PC-9 (cell line): ENCODE measurements at regions of chr12 and their contacts with region 1.

Region 1: GRCh38 chr12:66087365-66087943 is 43.1 kb downstream of the LLPH start:
- DNase-seq: peak in 1 of 2 experiments; percentile 56
- H3K4me3 ChIP-seq: no peak overlapping the region
- H3K27ac ChIP-seq: no peak overlapping the region
- H3K4me1 ChIP-seq: no peaks in the 10 kb centered on the region
- H3K27me3 ChIP-seq: no peaks in the 10 kb centered on the region
- CTCF ChIP-seq: peak; percentile 80

Region 2: GRCh38 chr12:64835901-64836300 is 1251.6 kb before region 1 on chr12:
- CTCF ChIA-PET with region 1: no interaction called
- POLR2A ChIA-PET with region 1: no interaction called
- intact Hi-C with region 1: no loop called
- DNase-seq: no peak
- H3K4me3 ChIP-seq: no peak overlapping the region
- H3K27ac ChIP-seq: no peak overlapping the region
- H3K4me1 ChIP-seq: 0 out of 2 replicates have a peak, but pooled peaks cover 7% of the 10 kb centered on the region
- H3K27me3 ChIP-seq: no peaks in the 10 kb centered on the region
- CTCF ChIP-seq: no peak

Region 3: DNA sequence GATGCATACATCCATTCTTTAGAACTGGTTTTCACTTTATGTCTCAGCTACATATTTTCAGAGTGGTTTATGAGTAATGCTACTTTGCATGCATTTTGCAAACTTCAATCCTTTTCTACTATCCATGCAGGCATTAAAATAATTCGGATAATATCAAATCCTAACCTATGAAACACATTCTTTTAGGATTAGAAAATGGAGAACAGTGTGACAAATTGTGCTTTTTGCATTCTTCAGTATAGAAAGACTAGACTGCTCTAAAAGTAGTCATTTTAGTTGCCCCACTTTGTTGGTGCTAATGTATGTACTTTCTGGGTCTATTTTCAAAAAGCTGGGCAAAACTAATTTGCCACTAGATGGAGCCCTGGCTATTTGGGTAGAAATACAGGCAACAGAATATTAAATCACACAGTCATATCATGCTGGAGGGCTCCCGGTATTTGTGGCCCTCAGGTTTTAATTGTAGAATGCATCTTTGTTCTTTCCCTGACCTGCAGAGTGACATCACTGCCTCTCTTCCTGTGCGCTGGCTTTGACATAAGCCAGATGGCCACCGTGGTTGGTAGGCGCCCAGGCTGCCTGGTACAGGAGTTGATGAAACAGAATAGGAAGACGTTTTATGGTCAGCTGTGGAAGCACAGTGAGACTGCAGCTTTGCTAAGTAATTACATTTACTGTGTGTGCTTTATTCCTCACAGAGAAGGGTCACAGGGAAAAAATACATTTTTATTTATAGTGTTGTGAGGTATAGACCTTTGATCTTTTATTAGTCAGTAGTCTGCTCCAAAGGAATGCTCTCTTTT is 780.9 kb before region 1 on chr12:
- CTCF ChIA-PET with region 1: interaction called, 3 read pairs
- POLR2A ChIA-PET with region 1: no interaction called
- intact Hi-C with region 1: loop called (anchors 1 kb)
- DNase-seq: peak in 1 of 2 experiments; percentile 32
- H3K4me3 ChIP-seq: no peak overlapping the region
- H3K27ac ChIP-seq: no peak overlapping the region
- H3K4me1 ChIP-seq: no peaks in the 10 kb centered on the region
- H3K27me3 ChIP-seq: no peaks in the 10 kb centered on the region
- CTCF ChIP-seq: peak; percentile 76

Region 4: DNA sequence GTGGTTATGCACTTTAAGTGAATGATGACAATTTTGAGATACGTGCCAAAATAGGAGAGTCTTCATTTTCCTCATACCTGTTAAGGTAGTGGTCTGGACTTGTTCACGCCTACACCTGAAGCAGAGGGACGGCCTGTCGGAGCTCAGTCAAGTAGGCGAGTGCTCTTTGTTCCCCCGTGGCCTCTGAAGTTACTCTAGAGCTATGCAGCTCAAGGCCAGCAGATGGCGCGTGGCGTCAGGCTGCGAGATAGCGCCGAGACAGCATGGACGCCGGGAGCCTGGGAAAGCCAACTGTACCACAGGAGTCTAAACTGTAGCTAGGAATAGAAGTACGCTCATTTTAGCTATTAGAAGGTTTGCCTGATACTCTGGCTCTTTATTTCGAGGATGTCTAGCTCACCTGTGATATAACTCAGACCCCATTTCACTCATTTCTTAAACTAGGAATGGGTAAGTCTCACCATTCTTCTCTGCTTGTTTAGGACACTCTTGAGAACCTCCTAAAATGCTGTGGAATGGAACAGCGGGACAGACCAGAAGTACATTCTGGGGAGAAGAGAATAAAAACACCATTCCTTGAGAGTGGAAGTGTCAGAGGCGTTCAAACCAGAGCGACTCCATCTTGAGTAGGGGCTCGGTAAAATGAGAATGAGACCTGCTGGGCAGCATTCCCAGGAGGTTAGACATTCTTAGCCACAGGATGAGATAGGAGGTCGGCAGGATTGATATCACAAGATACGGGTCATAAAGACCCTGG is 530.6 kb before region 1 on chr12:
- CTCF ChIA-PET with region 1: no interaction called
- POLR2A ChIA-PET with region 1: no interaction called
- intact Hi-C with region 1: loop called (anchors 2 kb)
- DNase-seq: peak; percentile 63 to 82
- H3K4me3 ChIP-seq: no peak overlapping the region
- H3K27ac ChIP-seq: no peak overlapping the region
- H3K4me1 ChIP-seq: peaks cover 11% of the 10 kb centered on the region
- H3K27me3 ChIP-seq: no peaks in the 10 kb centered on the region
- CTCF ChIP-seq: peak; percentile 91

Region 5: DNA sequence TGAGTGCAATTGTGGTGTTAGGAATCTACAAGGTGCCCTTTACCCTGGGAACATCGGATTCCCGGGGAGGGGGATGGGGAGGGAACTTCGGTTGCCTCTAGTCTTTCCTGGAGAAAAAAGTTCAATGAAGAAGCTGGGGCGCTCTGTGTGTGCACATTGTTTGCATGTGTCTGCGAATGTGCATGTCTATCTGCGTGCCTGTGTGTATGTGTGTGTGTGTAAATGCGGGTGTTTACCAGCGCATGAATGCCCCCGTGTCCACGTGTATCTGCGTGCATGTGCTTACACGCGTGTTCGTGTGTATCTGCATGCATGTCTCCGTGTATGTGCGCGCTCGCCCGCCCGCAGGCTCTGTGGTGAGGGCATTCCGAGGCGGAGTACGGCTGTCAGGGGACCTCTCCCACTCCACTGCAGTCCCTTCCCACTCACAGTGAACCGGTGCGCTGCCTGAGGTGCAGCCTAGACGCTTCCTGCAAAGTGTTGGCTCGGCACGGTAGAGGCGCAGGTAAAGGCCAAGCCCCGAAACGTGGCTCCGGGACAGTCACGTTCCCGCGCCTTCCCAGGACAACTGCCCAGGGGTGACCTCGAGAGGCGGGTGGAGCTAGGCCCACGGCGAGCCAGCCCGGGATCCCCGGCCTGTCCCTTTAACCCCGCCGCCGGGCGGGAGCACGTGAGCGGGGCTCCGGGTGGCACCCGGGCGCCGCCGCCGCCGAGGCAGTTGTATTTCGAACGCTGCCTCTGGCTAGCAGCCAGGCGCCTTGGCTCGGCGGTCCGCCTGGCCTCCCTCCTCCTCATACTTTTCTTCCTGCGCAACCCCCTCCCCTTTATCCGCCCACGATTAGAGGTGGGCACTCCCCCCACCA is 263.7 kb before region 1 on chr12:
- CTCF ChIA-PET with region 1: no interaction called
- POLR2A ChIA-PET with region 1: no interaction called
- intact Hi-C with region 1: loop called (anchors 10 kb)
- DNase-seq: peak; percentile 54 to 61
- H3K4me3 ChIP-seq: peak overlapping the region; percentile 93
- H3K27ac ChIP-seq: peak overlapping the region; percentile 88
- H3K4me1 ChIP-seq: peaks cover 49% of the 10 kb centered on the region
- H3K27me3 ChIP-seq: no peaks in the 10 kb centered on the region
- CTCF ChIP-seq: no peak

Region 6: DNA sequence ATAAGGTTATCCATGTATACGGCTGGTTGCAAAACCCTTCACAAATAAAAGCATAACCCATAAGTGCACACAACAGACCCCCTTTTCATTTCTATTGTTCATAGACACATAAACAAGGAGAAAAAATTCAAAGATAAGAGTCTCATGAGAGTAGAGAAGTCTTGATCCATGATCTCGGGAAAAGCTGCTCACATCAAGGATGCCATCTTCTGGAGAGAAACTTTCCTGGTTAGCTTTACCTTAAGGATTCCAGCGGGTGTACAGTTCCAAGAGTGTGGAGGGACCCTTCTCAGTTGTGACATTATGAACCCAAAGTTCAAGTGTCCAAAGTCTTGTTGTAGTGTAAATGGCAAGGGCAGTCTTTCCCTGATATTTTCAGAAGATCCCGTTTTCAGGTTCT is 101.4 kb before region 1 on chr12:
- CTCF ChIA-PET with region 1: no interaction called
- POLR2A ChIA-PET with region 1: no interaction called
- intact Hi-C with region 1: loop called (anchors 2 kb)
- DNase-seq: peak in 1 of 2 experiments; percentile 32
- H3K4me3 ChIP-seq: no peak overlapping the region
- H3K27ac ChIP-seq: no peak overlapping the region
- H3K4me1 ChIP-seq: no peaks in the 10 kb centered on the region
- H3K27me3 ChIP-seq: no peaks in the 10 kb centered on the region
- CTCF ChIP-seq: no peak

Region 7: DNA sequence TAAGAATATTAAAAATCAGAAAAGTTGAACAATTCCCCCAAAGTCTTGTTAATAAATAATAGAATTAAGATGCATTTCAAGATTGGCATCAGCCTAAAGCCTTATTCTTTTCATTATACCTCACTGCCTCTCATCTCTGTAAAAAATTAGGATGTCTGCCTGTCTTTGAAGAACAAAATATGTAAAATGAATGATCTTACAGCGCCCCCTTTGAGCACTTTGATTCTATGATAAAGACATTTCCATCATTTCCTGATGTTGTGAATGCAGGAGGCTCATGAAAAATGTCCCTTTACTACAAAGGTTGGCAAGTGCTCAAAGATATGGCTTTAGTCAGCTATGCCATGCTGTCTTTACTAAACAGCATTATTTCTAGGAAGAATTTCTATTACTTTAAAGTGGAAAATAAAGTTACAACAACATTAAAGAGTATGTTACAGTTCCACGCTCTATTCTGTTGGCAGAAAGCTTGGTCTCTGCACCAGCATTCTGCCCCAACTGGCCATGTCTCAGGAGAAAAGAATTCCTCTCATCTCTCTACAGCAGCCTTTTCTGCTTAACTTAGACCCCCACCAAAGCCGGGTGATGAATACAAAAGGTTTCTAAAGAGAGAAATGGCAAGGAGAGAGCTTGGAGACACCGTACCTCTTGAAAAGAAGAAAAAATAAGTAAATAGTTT is 52.0 kb before region 1 on chr12:
- CTCF ChIA-PET with region 1: no interaction called
- POLR2A ChIA-PET with region 1: no interaction called
- intact Hi-C with region 1: loop called (anchors 5 kb)
- DNase-seq: no peak
- H3K4me3 ChIP-seq: no peak overlapping the region
- H3K27ac ChIP-seq: no peak overlapping the region
- H3K4me1 ChIP-seq: peaks cover 7% of the 10 kb centered on the region; the same call in 1 of the 2 replicates
- H3K27me3 ChIP-seq: no peaks in the 10 kb centered on the region
- CTCF ChIP-seq: peak; percentile 68